ENCODE measurements at regions of chr11 and their contacts with region 1.

Region 1: DNA sequence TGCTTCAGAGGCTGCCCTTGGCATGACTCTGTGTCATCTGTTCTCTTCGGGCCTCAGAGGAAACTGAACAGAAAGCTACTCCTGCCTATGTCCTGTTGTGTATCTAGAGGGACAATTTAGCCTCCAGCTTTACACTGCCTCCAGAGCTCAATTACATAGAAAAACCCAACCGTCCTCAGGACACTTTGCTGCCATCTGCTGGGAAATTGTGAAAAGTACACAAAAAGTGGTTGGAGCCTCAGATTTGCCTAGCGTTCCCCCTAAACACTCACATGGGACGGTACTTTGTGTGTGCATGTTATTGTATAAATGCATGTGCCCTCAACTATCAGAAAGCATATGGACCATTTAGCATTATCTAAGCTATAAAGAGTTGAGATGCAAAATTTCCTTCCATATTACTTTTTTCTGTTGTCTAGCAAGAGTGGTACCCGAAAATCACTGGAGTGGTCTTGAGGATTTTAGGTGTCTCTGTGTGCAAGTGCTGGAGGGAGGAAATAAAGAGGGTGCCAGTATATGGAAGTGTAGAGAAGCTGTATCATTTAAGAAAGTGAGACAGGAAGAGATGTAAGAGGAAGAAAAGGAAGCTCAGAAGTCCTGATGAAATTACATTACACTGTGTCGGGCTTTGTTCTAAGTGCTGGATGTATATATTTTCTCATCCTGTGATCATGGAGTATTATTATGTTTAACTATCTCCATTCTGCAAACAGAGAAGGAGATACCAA is 8.7 kb upstream of the MS4A4E start:
- DNase-seq: no peak
- H3K4me3 ChIP-seq: no peak overlapping the region
- H3K27ac ChIP-seq: peak overlapping the region in 2 of 4 donors; percentile 20 to 48
- H3K4me1 ChIP-seq: no peaks in the 10 kb centered on the region
- H3K27me3 ChIP-seq: no peaks in the 10 kb centered on the region
- CTCF ChIP-seq: peak; percentile 24 to 41 (median 40)
- EP300 ChIP-seq: no peak
- POLR2A ChIP-seq: no peak

Region 2: DNA sequence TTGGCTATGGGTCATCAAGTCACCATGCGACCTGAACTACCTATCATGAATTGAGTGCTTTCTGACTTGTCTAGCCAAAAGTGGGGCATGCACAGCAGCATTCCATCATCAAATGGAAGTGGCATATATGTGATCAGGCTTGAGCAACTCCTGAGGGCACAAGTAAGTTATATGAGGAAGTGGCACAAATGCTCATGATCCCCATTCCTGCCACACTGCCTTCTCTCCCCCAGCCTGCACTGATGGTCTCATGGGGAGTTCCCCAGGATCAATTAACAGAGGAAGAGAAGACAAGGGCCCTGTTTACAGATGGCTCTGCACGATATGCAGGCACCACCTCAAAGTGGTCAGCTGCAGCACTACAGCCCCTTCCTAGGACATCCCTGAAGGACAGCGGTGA is 30.5 kb before region 1 on chr11:
- in situ Hi-C with region 1: no loop called
- intact Hi-C with region 1: loop called (anchors 2 kb)
- DNase-seq: no peak
- H3K4me3 ChIP-seq: no peak overlapping the region
- H3K27ac ChIP-seq: no peak overlapping the region
- H3K4me1 ChIP-seq: no peaks in the 10 kb centered on the region
- H3K27me3 ChIP-seq: no peaks in the 10 kb centered on the region
- CTCF ChIP-seq: no peak
- EP300 ChIP-seq: no peak
- POLR2A ChIP-seq: no peak

Measured in transverse colon (tissue), 4 donors.